ENCODE measurements at regions of chr1 and their contacts with region 1.

Region 1: DNA sequence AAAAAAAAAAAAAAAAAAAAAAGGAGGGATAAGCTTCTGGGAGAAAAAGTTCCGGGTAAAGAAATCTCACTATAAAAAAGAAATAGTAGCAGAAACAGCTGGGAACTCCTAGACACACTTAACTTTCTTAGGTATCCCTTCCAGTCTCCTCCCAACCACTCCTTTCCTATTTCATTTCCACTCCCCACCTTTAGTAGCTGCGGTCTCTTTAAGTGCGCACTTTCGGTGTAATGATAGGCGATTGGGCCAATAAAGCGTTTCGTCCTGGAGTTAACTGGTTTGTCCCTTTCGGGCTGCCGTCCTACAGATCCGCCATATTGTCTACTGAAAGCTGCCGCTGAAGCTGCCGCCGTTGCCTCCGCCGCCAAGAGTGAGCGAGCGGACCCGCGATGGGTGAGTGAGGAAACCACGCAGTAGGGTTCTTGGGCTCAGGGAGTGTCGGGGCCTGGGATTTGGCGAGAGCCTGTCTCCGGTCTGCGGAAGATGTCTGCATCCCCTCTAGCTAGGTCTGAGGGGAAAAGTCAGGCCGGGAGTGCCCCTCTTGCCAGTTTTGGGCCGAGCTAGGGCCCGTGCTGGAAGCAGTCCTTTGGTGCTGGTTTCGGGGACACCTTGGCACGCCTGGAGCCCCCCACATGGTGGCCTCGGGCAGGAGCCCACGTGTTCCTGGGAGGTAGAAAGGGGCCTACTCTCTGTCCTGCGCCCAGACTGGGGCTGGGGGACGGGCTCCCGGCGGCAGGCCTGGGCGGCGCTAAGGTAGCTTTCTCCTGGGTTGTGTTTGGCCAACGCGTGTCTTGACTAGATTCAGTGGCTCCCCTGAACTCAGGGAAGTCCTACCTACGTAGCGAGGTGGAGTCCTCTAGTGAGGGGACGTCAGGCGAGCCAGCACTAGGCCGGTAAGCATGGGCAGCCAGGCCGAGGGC is at the start of gene KPNA6:
- DNase-seq: peak; percentile 89

Region 2: DNA sequence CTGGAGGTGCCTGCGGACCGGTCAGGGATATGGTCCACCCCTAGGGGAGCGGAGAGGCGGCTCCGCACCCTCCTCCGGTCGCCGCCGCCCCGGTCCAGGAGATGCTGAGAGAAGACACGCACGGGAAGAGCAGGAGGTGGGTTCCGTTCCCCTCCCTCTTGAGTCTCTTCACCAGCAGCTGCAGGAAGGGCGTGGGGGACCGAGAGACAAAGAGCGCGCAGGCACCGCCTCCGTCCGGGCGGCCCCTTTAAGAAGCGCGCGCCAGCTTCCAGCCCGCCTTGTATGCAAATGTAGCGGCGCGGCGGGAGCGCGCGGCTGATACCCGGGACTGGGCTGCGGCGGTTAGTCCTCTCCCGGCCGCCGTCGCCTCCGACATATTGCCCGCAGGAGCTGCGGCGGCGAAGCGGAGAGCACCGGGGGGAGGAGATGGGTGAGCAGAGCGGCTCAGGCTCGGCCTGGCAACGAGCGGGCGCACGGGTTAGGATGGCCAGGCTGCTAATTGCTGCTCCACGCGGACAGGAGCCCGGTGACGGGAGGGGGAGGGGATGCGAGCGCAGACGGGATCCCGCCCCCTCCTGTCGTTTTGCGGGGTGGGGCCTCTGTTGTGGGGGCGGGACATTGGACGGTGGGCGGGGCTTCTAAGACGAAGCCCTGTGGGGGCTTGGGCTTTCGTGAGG is 35.2 kb before region 1 on chr1 and contains the start of gene TMEM39B:
- CTCF ChIA-PET with region 1: interaction called, 3 read pairs
- POLR2A ChIA-PET with region 1: interaction called, 17 read pairs
- DNase-seq: peak; percentile 100

Measured in HEK293T (cell line).